ENCODE measurements at regions of chr3 and their contacts with region 1.

Region 1: GRCh38 chr3:45760878-45761711 is 35.2 kb downstream of the SLC6A20 start:
- DNase-seq: peak; percentile 87
- H3K4me3 ChIP-seq: no peak overlapping the region; a peak in 1 of 4 replicates
- H3K27ac ChIP-seq: no peak overlapping the region
- H3K4me1 ChIP-seq: no peaks in the 10 kb centered on the region; a peak in 1 of 4 replicates
- H3K27me3 ChIP-seq: no peaks in the 10 kb centered on the region; the same call in 1 of the 2 replicates
- CTCF ChIP-seq: peak; percentile 77
- EP300 ChIP-seq: no peak
- RAD21 ChIP-seq: peak; percentile 94

Region 2: DNA sequence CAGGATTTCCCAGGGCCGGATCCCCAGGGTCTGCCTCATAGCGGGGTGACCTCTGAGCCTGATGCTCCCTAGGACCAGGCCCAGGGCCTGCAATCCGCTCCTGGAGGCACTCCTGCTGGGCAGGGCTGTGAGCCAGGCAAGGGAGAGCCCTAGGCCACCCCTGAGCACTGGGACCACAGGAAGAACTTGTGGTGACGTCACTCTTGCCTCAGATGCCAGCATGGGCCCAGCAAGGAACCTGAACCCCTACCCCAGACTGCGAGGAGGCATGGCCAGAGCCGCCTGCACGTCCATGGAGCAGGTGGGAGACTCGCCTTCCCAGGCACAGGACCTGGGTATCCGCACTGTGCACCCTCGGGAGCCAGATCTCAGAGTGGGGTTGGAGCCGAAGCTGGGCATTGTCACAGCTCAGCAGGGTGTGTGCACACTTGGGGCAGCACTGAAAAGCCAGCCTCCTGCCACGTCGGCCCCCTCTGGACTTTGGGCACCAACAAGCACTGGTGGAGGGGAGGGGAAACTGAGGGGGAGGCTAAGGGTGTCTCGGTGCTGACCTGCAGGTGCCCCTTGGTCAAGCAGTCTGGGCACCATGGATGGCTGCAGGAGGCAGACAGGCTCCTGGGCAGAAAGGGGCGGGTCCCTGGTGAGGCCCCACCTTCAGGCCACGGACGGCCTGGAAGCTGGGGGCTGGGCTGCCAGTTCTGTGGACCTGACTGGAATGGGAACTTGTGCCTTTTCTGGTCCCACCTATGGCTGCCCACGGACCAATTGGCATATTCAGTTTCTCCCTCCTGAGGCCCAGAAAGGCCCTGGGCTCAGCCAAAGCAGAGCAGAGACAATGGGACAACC is 14.1 kb before region 1 on chr3:
- CTCF ChIA-PET with region 1: interaction called, 36 read pairs
- POLR2A ChIA-PET with region 1: no interaction called
- DNase-seq: no peak
- H3K4me3 ChIP-seq: no peak overlapping the region
- H3K27ac ChIP-seq: no peak overlapping the region
- H3K4me1 ChIP-seq: no peaks in the 10 kb centered on the region
- H3K27me3 ChIP-seq: no peaks in the 10 kb centered on the region
- CTCF ChIP-seq: no peak
- EP300 ChIP-seq: no peak
- RAD21 ChIP-seq: no peak

Region 3: DNA sequence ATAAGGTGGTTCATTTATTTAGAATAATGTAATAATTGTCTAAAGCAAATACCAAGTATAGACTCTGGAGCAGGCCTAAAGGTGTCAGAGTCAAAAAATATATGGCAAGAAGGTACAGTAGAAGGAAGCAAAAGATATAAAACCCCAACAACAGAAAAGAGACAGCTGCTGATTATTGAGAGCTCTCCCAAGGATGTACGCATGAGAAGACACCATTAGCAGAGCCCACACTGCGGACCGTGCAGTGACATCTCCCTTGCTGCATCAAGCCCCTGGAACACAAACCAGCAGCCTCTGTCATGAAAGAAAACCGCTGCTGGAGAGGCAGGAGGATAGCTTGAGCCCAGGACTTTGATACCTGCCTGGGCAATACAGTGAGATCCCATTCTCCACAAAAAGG is 53.2 kb after region 1 on chr3:
- CTCF ChIA-PET with region 1: interaction called, 11 read pairs
- POLR2A ChIA-PET with region 1: no interaction called
- DNase-seq: no peak
- H3K4me3 ChIP-seq: no peak overlapping the region
- H3K27ac ChIP-seq: no peak overlapping the region
- H3K4me1 ChIP-seq: peaks cover 0 to 2% of the 10 kb centered on the region in 2 experiments; a peak in 2 of 4 replicates
- H3K27me3 ChIP-seq: no peaks in the 10 kb centered on the region
- CTCF ChIP-seq: no peak
- EP300 ChIP-seq: no peak
- RAD21 ChIP-seq: no peak

Region 4: GRCh38 chr3:45832691-45833090 is 71.6 kb after region 1 on chr3:
- CTCF ChIA-PET with region 1: interaction called, 42 read pairs
- POLR2A ChIA-PET with region 1: no interaction called
- DNase-seq: peak; percentile 25
- H3K4me3 ChIP-seq: no peak overlapping the region
- H3K27ac ChIP-seq: no peak overlapping the region
- H3K4me1 ChIP-seq: no peaks in the 10 kb centered on the region
- H3K27me3 ChIP-seq: no peaks in the 10 kb centered on the region
- CTCF ChIP-seq: peak; percentile 37
- EP300 ChIP-seq: no peak
- RAD21 ChIP-seq: peak; percentile 66

Region 5: GRCh38 chr3:45923755-45924154 is 162.7 kb after region 1 on chr3:
- CTCF ChIA-PET with region 1: interaction called, 142 read pairs
- POLR2A ChIA-PET with region 1: no interaction called
- DNase-seq: no peak
- H3K4me3 ChIP-seq: no peak overlapping the region
- H3K27ac ChIP-seq: no peak overlapping the region
- H3K4me1 ChIP-seq: no peaks in the 10 kb centered on the region
- H3K27me3 ChIP-seq: no peaks in the 10 kb centered on the region
- CTCF ChIP-seq: no peak
- EP300 ChIP-seq: no peak
- RAD21 ChIP-seq: no peak

Region 6: DNA sequence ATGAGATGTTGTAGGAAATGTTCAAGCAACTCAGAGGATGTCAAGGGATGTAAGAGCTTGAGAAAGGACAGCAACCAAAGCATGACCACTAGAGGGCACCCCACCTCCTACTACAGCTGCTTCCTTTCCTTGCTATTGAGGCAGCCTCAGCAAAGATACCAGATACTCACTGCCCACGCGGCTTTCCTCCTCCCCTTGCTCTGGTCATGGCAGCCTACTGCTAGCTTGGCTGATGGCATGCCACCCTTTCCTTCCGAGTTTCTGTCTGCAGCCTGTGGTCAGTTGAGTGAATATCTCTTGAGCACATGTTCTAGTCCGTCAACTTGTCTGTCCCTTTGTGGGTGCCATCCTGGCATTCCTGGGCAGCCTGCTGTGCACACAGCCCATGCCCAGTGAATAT is 177.8 kb after region 1 on chr3:
- CTCF ChIA-PET with region 1: interaction called, 142 read pairs
- POLR2A ChIA-PET with region 1: no interaction called
- DNase-seq: peak; percentile 73
- H3K4me3 ChIP-seq: no peak overlapping the region; a peak in 1 of 4 replicates
- H3K27ac ChIP-seq: no peak overlapping the region
- H3K4me1 ChIP-seq: peaks cover 0 to 18% of the 10 kb centered on the region in 2 experiments; a peak in 1 of 4 replicates
- H3K27me3 ChIP-seq: no peaks in the 10 kb centered on the region
- CTCF ChIP-seq: peak; percentile 92
- EP300 ChIP-seq: no peak
- RAD21 ChIP-seq: peak; percentile 89